Common myeloid progenitor, CD34-positive (primary cell): ENCODE measurements at regions of chr21 and their contacts with region 1.

Region 1: GRCh38 chr21:29114765-29115164 is 15.7 kb upstream of the MAP3K7CL start:
- DNase-seq: no peak
- H3K4me3 ChIP-seq: no peak overlapping the region
- H3K27ac ChIP-seq: no peak overlapping the region
- H3K4me1 ChIP-seq: peaks cover 0 to 2% (median 0%) of the 10 kb centered on the region in 4 experiments
- H3K27me3 ChIP-seq: no peaks in the 10 kb centered on the region

Region 2: GRCh38 chr21:29104239-29104708 is 10.5 kb before region 1 on chr21:
- CTCF ChIA-PET with region 1: interaction called, 16 read pairs
- POLR2A ChIA-PET with region 1: no interaction called
- DNase-seq: no peak
- H3K4me3 ChIP-seq: no peak overlapping the region
- H3K27ac ChIP-seq: no peak overlapping the region
- H3K4me1 ChIP-seq: peaks cover 0 to 7% (median under 1%) of the 10 kb centered on the region in 4 experiments
- H3K27me3 ChIP-seq: no peaks in the 10 kb centered on the region

Region 3: DNA sequence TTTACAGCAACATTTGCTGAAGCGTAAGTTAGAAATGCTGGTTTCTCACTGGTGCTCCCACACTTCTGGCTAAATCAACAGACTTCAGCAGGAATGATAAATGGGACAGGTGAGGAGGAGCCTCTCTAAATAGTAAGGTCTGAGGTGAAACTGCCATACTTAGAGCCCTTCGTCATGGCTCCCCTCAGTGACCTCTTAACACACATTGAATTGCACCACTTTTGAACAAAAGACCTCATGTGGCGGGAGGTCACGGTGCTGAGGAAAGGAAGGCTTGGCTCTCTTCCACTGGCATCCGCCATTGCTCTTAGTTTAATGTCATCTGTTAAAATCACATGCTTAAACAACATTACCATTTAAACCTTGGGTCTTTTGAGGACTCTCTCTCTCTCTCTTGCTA is 19.0 kb after region 1 on chr21:
- CTCF ChIA-PET with region 1: no interaction called
- POLR2A ChIA-PET with region 1: no interaction called
- DNase-seq: no peak
- H3K4me3 ChIP-seq: no peak overlapping the region
- H3K27ac ChIP-seq: no peak overlapping the region
- H3K4me1 ChIP-seq: no peaks in the 10 kb centered on the region
- H3K27me3 ChIP-seq: no peaks in the 10 kb centered on the region